Endothelial cell of umbilical vein (primary cell): ENCODE measurements at regions of chr12 and their contacts with region 1.

Region 1: GRCh38 chr12:45130881-45131281 is 80.0 kb upstream of the DBX2 start:
- DNase-seq: peak; percentile 71
- H3K4me3 ChIP-seq: no peak overlapping the region
- H3K27ac ChIP-seq: no peak overlapping the region
- H3K4me1 ChIP-seq: no peaks in the 10 kb centered on the region
- H3K27me3 ChIP-seq: peaks cover 5 to 22% of the 10 kb centered on the region in 2 experiments
- CTCF ChIP-seq: peak; percentile 52 to 61
- POLR2A ChIP-seq: no peak

Region 2: DNA sequence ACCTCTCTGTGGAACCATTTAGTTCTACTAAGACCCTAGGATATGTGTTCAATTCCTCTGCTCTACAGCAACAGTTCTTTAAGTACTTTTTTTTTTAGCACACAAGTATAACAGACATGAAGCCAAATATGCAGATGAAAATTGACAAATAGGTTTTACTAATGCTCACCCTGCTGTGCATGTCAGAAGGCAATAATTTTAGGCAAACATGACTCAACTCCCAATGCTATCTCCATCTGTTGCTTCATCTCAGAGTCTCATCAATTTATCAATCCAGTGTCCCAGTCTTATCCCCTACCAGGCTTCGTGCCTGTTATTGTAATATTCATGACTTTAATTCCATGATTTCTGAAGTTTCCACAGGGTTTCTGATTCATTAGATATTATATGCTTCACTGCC is 137.7 kb before region 1 on chr12:
- CTCF ChIA-PET with region 1: no interaction called
- POLR2A ChIA-PET with region 1: no interaction called
- dilution Hi-C with region 1: no loop called
- intact Hi-C with region 1: no loop called
- DNase-seq: no peak
- H3K4me3 ChIP-seq: no peak overlapping the region
- H3K27ac ChIP-seq: no peak overlapping the region
- H3K4me1 ChIP-seq: no peaks in the 10 kb centered on the region
- H3K27me3 ChIP-seq: no peaks in the 10 kb centered on the region
- CTCF ChIP-seq: no peak
- POLR2A ChIP-seq: no peak

Region 3: DNA sequence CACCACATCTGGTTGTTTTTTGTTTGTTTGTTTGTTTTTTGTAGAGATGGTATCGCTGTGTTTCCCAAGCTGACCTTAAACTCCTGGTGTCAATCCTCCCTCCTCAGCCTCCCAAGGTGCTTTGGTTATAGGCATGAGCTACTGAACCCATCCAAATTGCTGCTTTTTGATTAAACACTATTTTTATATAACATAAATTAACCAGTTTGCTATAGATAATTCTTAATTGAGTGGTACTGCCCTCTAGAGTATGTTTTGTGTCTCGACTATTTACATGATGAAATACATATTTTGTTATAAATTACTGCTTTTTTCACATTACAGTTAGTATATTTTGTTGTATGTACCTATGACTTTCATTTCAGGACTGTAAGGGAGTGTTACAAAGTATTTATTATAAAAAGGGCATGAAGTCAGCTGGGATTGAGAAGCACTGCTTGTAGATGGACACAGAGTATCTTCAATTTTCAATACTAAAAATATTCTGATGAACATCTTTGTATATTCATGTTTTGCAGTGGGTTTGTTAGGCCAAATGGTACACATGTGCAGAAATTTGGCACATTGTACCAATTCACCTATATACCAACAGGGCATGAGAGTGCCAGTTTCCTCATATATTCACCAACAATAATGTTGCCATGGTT is 874.4 kb after region 1 on chr12:
- CTCF ChIA-PET with region 1: no interaction called
- POLR2A ChIA-PET with region 1: no interaction called
- dilution Hi-C with region 1: no loop called
- intact Hi-C with region 1: loop called (anchors 2 kb)
- DNase-seq: peak; percentile 34
- H3K4me3 ChIP-seq: no peak overlapping the region
- H3K27ac ChIP-seq: no peak overlapping the region
- H3K4me1 ChIP-seq: no peaks in the 10 kb centered on the region
- H3K27me3 ChIP-seq: peaks cover 5 to 13% of the 10 kb centered on the region in 2 experiments
- CTCF ChIP-seq: no peak
- POLR2A ChIP-seq: no peak